ENCODE measurements at regions of chr5 and their contacts with region 1.

Region 1: DNA sequence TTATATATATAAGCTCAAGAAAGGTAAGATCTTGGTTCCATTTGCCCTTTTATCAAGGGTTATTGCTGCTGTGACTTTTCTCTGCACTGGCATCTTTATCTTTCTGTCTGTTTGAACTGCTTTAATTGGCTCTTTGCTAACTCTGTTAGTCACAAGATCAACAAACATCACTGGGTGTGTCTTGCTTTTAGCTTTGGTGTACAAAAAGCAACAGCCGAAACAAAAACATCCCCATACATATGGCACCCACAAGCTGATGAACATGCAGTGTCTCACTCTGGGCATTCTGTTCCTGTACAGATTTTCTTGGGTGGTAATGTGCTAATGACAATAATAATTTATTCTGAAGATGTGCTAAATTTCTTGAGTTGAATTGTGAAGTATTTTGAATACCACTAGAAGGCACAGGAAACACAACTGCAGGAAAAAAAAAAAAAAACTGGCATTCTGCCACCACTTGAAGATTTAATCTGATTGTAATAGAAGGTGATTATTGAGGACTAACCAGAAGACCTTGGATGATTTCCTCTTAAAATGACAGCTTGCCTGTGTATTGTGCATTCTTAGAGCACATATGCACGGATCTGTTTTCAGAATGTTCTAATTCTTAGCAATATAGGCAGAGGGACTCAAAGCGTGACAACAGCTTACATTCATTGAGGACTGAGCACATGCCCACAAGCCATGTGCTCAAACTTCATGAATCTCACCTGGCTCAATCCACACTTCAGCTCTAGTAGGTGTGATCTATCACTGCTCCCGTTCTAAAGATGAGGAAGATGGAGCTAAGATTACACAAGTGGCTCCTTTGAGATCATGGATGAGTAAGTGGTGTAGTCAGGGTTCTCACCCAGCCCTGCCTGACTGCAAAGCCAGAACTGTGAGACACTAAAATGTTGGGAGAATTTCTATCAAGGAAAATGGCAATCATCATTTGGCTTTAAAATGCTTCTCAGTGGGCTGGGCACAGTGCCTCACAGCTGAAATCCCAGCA is 96.4 kb downstream of the EBF1 start:
- DNase-seq: peak; percentile 47 to 63 (median 60)
- H3K4me3 ChIP-seq: no peak overlapping the region
- H3K4me3 Mint-ChIP-seq: peak overlapping the region in 6 of 8 donors; percentile 10 to 74 (median 46)
- H3K27ac ChIP-seq: no peak overlapping the region
- H3K27ac Mint-ChIP-seq: peak overlapping the region in 6 of 7 donors; percentile 27 to 58 (median 36)
- H3K4me1 ChIP-seq: peaks cover 12% of the 10 kb centered on the region
- H3K4me1 Mint-ChIP-seq: peaks cover 11 to 30% (median 24%) of the 10 kb centered on the region in 4 donors
- H3K27me3 ChIP-seq: no peaks in the 10 kb centered on the region
- H3K27me3 Mint-ChIP-seq: peaks cover 6 to 14% of the 10 kb centered on the region in 2 donors

Region 2: DNA sequence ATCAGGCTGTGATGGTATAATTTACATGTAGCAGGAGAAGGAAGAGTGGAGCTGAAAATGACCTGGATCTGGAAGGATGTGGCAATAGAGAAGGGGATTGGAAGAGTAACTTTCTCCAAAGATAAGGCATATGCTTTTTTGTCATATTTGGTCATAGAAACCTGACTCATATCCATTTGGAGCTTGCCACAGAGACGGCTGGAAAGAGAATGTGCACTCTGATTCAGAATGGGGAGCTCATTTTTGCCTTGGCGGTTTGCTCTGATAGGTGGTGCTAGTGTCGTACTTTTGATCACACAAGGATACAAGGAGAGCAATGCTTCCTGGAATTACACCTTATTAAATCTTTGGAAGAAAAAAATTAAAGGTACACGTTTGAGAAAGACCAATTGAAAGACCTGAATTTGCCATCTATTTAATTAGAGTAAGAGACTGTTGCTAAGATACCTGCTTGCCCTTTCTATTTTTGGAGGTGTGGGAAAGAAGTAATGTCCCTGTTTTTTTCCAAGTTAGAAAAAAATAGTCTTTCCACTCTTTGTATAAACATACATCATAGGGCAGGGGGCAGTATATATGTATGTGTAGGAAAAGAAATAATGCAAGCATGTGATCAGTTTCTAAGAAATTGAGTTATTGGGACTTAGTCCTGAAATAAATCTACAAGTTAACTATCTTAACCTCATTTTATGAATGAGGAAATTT is 1254.4 kb before region 1 on chr5:
- CTCF ChIA-PET with region 1: no interaction called
- POLR2A ChIA-PET with region 1: no interaction called
- intact Hi-C with region 1: no loop called
- DNase-seq: no peak
- H3K4me3 ChIP-seq: no peak overlapping the region
- H3K4me3 Mint-ChIP-seq: no peak overlapping the region
- H3K27ac ChIP-seq: no peak overlapping the region
- H3K27ac Mint-ChIP-seq: no peak overlapping the region
- H3K4me1 ChIP-seq: peaks cover 12% of the 10 kb centered on the region
- H3K4me1 Mint-ChIP-seq: peaks cover 13 to 21% (median 19%) of the 10 kb centered on the region in 4 donors
- H3K27me3 ChIP-seq: no peaks in the 10 kb centered on the region
- H3K27me3 Mint-ChIP-seq: no peaks in the 10 kb centered on the region

Region 3: DNA sequence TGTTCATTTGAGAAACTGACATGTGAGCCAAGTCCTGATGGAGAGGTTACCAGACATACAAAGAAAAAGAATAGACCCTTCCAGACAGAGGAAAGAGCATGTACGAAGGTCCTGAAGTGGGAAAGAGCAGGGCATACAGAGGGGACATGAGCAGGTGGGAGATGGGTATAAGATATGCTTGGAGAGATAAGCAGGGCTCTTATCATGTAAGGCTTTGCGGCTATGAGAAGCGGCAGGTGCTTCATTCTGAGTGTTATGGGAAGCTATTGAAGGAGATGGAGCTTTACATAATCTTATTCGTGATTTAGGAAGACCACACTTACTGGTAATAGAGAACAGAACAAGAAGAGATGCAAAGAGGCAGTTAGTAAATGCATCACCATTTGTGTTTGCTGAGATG is 320.7 kb before region 1 on chr5:
- CTCF ChIA-PET with region 1: no interaction called
- POLR2A ChIA-PET with region 1: no interaction called
- intact Hi-C with region 1: no loop called
- DNase-seq: no peak
- H3K4me3 ChIP-seq: no peak overlapping the region
- H3K4me3 Mint-ChIP-seq: no peak overlapping the region
- H3K27ac ChIP-seq: no peak overlapping the region
- H3K27ac Mint-ChIP-seq: no peak overlapping the region
- H3K4me1 ChIP-seq: no peaks in the 10 kb centered on the region
- H3K4me1 Mint-ChIP-seq: no peaks in the 10 kb centered on the region
- H3K27me3 ChIP-seq: no peaks in the 10 kb centered on the region
- H3K27me3 Mint-ChIP-seq: peaks cover 11 to 15% of the 10 kb centered on the region in 2 donors

Region 4: DNA sequence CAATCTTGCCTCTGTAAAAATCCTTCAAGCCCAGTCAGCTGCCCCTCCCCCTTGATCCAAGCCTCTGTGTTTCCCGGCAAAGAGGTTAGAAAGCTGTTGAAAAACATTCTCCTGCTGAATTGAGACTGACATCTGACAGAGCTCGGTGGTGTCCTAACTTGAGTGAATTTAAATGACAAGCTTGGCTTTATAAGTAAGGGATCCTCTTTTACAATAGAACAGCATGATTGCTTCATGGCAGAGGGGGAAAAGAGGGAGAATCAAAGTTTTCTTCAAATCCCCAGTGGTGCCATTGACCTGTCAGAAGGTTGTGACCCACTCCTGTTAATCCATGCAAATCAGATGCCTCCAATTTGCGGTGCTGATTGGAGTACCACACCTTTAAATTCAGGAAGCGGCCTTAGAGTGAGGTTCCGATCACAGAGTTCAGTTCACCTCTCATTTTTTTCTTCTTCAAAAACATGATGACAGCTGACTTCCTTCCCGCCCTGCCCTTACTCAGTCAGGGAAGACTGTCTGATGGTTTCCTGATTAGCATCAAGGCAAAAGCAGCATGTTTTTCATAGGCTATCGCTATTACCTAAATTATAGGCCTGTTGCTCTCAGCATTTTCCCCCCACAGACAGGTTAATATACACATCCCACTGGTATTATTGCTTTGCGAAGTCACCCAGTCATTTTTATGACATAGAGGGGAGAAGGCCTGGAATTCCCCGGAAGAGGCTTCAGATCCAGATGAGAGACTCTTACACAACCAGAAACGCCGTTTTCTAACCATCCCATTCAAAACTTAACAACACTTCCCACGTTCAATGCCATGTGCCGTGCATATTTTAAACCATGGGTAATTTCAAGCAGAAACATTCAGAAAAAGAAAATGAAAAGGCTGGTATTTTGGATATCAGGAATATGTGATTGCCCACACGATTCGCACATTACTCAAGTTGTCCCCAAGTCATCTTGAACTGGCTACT is 45.0 kb before region 1 on chr5:
- CTCF ChIA-PET with region 1: interaction called, 3 read pairs
- POLR2A ChIA-PET with region 1: no interaction called
- intact Hi-C with region 1: loop called (anchors 5 kb)
- DNase-seq: peak in 4 of 5 donors; percentile 10 to 28 (median 17)
- H3K4me3 ChIP-seq: no peak overlapping the region
- H3K4me3 Mint-ChIP-seq: peak overlapping the region in 6 of 8 donors; percentile 2 to 72 (median 38)
- H3K27ac ChIP-seq: no peak overlapping the region
- H3K27ac Mint-ChIP-seq: peak overlapping the region in 5 of 7 donors; percentile 37 to 79 (median 78)
- H3K4me1 ChIP-seq: peaks cover 13% of the 10 kb centered on the region
- H3K4me1 Mint-ChIP-seq: peaks cover 6 to 18% (median 16%) of the 10 kb centered on the region in 4 donors
- H3K27me3 ChIP-seq: no peaks in the 10 kb centered on the region
- H3K27me3 Mint-ChIP-seq: no peaks in the 10 kb centered on the region

Region 5: GRCh38 chr5:159274676-159275075 is 271.3 kb after region 1 on chr5:
- CTCF ChIA-PET with region 1: no interaction called
- POLR2A ChIA-PET with region 1: no interaction called
- intact Hi-C with region 1: no loop called
- DNase-seq: no peak
- H3K4me3 ChIP-seq: no peak overlapping the region
- H3K4me3 Mint-ChIP-seq: peak overlapping the region in 3 of 8 donors; percentile 3 to 41 (median 24)
- H3K27ac ChIP-seq: no peak overlapping the region
- H3K27ac Mint-ChIP-seq: peak overlapping the region in 1 of 7 donors; percentile 0
- H3K4me1 ChIP-seq: peaks cover 15% of the 10 kb centered on the region
- H3K4me1 Mint-ChIP-seq: peaks cover 8 to 25% (median 18%) of the 10 kb centered on the region in 4 donors
- H3K27me3 ChIP-seq: no peaks in the 10 kb centered on the region
- H3K27me3 Mint-ChIP-seq: no peaks in the 10 kb centered on the region

Measured in CD4-positive, alpha-beta memory T cell (primary cell).